H1 (cell line): ENCODE measurements at regions of chr11 and their contacts with region 1.

Region 1: GRCh38 chr11:128146926-128147605 is 440.3 kb downstream of the ETS1 start:
- DNase-seq: no peak
- H3K4me3 ChIP-seq: no peak overlapping the region
- H3K27ac ChIP-seq: no peak overlapping the region
- H3K4me1 ChIP-seq: peaks cover 0 to 2% (median 0%) of the 10 kb centered on the region in 4 experiments; a peak in 2 of 7 replicates
- H3K27me3 ChIP-seq: no peaks in the 10 kb centered on the region
- CTCF ChIP-seq: no peak
- EP300 ChIP-seq: no peak
- POLR2A ChIP-seq: no peak
- RAD21 ChIP-seq: no peak

Region 2: DNA sequence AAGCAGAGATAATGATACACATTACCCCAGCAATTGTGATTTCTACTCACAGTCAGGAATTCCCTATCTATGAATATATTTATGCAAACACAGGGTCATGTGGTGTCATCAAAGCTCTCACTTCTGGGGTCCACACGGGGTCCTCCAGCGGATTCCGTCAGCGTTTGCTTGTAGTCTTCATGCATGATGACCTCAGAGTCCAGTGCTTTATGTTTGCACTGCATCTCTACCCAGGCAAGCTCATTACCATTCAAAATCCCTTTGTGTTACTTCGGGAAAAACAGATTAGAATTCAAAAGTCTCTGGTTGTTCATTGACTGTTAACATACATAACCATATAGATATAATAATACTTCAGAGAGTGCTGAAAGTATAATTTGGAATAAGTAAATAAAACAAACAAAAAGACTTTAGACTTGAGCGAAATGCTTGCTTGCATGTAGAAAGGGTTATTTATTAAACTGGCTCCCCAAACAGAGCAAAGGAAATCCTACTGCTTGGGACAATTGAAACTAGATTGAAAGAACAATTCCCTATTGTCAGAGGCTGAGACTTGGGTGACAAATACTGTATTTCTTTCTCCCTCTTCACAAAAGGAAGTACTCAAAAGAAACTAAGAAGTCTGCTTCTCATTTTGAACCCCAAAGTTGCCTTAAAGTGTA is 17.1 kb after region 1 on chr11:
- CTCF ChIA-PET with region 1: interaction called, 13 read pairs
- POLR2A ChIA-PET with region 1: no interaction called
- DNase-seq: no peak
- H3K4me3 ChIP-seq: no peak overlapping the region
- H3K27ac ChIP-seq: no peak overlapping the region
- H3K4me1 ChIP-seq: no peaks in the 10 kb centered on the region
- H3K27me3 ChIP-seq: peaks cover 0 to 1% (median 0%) of the 10 kb centered on the region in 4 experiments; a peak in 1 of 7 replicates
- CTCF ChIP-seq: no peak
- EP300 ChIP-seq: no peak
- POLR2A ChIP-seq: no peak
- RAD21 ChIP-seq: no peak